T-cell (primary cell): ENCODE measurements at regions of chr2 and their contacts with region 1.

Region 1: GRCh38 chr2:160516547-160517365 is 23.1 kb upstream of the RBMS1 start:
- DNase-seq: no peak
- ATAC-seq: peak; percentile 28 to 80 (median 52)
- H3K4me3 ChIP-seq: no peak overlapping the region
- H3K4me3 Mint-ChIP-seq: peak overlapping the region in 1 of 3 donors; percentile 5
- H3K27ac ChIP-seq: no peak overlapping the region
- H3K27ac Mint-ChIP-seq: peak overlapping the region; percentile 34 to 69
- H3K4me1 ChIP-seq: peaks cover 0 to 5% of the 10 kb centered on the region in 2 experiments
- H3K4me1 Mint-ChIP-seq: peaks cover 25 to 31% (median 27%) of the 10 kb centered on the region in 3 donors
- H3K27me3 ChIP-seq: no peaks in the 10 kb centered on the region
- H3K27me3 Mint-ChIP-seq: no peaks in the 10 kb centered on the region

Region 2: DNA sequence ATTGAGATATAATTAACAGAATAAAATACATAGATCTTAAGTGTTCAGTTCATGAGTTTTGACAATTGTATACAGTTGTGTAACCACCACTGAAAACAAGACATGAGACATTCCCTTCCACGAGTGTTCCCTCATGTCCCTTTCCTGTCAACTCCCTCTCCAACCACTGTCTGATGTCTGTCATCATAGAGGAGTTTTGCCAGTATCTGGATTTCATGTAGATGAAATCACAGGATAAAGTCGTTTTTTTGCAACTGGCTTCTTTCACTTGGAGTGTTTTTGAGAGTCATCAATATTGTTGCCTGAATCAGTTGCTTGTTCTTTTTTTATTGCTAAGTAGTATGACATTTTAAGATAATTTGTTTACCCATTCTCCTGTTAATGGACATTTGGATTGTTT is 75.9 kb before region 1 on chr2:
- CTCF ChIA-PET with region 1: no interaction called
- POLR2A ChIA-PET with region 1: interaction called in 1 of 2 experiments, 11 read pairs
- DNase-seq: no peak
- ATAC-seq: no peak
- H3K4me3 ChIP-seq: no peak overlapping the region
- H3K4me3 Mint-ChIP-seq: no peak overlapping the region
- H3K27ac ChIP-seq: no peak overlapping the region
- H3K27ac Mint-ChIP-seq: no peak overlapping the region
- H3K4me1 ChIP-seq: peaks cover 0 to 3% of the 10 kb centered on the region in 2 experiments
- H3K4me1 Mint-ChIP-seq: peaks cover 16 to 41% (median 38%) of the 10 kb centered on the region in 3 donors
- H3K27me3 ChIP-seq: no peaks in the 10 kb centered on the region
- H3K27me3 Mint-ChIP-seq: no peaks in the 10 kb centered on the region